ENCODE measurements at regions of chr7 and their contacts with region 1.

Region 1: DNA sequence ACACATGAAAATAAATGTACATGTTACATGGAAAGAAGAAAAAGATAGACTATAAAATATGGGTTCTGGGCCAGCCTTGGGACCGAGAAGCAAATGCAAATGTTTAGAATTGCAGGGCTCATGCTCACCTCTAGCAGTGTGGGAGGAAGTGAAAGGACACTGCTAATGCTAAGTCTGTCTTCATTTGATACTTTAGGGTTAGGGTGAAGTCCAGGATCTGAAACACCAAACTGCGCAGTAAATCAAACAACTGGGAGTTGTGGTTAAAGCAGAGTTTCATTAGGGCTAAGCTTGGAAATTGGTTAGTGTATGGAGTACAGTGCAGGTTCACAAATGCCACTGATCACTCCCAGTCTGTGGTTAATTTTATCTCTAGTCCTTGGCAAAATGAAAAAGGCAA is 73.2 kb upstream of the PDK4 start:
- DNase-seq: no peak
- ATAC-seq: no peak
- H3K4me3 ChIP-seq: no peak overlapping the region
- H3K27ac ChIP-seq: no peak overlapping the region
- H3K4me1 ChIP-seq: no peaks in the 10 kb centered on the region
- H3K27me3 ChIP-seq: no peaks in the 10 kb centered on the region; a peak in 1 of 5 replicates
- CTCF ChIP-seq: no peak
- EP300 ChIP-seq: no peak
- POLR2A ChIP-seq: no peak
- RAD21 ChIP-seq: no peak

Region 2: GRCh38 chr7:95700917-95701316 is 31.4 kb after region 1 on chr7:
- CTCF ChIA-PET with region 1: no interaction called
- POLR2A ChIA-PET with region 1: no interaction called
- in situ Hi-C with region 1: no loop called
- intact Hi-C with region 1: loop called (anchors 1 kb)
- DNase-seq: no peak
- ATAC-seq: no peak
- H3K4me3 ChIP-seq: no peak overlapping the region
- H3K27ac ChIP-seq: no peak overlapping the region
- H3K4me1 ChIP-seq: no peaks in the 10 kb centered on the region
- H3K27me3 ChIP-seq: no peaks in the 10 kb centered on the region
- CTCF ChIP-seq: no peak
- EP300 ChIP-seq: no peak
- POLR2A ChIP-seq: no peak
- RAD21 ChIP-seq: no peak

Region 3: DNA sequence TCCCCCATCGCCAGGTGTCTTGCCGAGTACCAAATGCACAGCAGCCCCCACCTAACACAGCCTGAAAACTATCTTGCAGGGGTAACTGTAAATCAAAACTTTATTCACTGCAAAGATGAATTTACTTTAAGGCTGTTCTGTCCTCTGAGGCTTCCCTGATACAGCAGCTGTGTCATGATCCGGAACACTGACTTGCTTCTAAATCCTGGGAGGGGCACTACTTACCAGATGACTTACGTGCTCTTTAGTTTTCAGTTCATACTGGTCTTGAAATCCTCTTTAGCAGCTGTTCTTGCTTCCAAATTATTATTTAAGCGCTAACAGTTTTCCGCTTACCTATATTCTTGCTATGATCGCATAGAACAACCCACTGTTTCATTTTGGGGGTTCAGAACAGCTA is 107.8 kb after region 1 on chr7:
- CTCF ChIA-PET with region 1: no interaction called
- POLR2A ChIA-PET with region 1: no interaction called
- in situ Hi-C with region 1: no loop called
- intact Hi-C with region 1: no loop called
- DNase-seq: no peak
- ATAC-seq: no peak
- H3K4me3 ChIP-seq: no peak overlapping the region
- H3K27ac ChIP-seq: no peak overlapping the region
- H3K4me1 ChIP-seq: 0 out of 2 replicates have a peak, but pooled peaks cover 5% of the 10 kb centered on the region
- H3K27me3 ChIP-seq: peaks cover 2 to 16% of the 10 kb centered on the region in 2 experiments
- CTCF ChIP-seq: no peak
- EP300 ChIP-seq: no peak
- POLR2A ChIP-seq: no peak
- RAD21 ChIP-seq: no peak